ENCODE measurements at regions of chr11 and their contacts with region 1.

Region 1: GRCh38 chr11:119323538-119324033 is 6.7 kb upstream of the MCAM start:
- DNase-seq: peak; percentile 83
- H3K4me3 Mint-ChIP-seq: no peak overlapping the region
- H3K27ac Mint-ChIP-seq: no peak overlapping the region
- H3K4me1 Mint-ChIP-seq: peaks cover 35% of the 10 kb centered on the region
- H3K27me3 Mint-ChIP-seq: peaks cover 9% of the 10 kb centered on the region

Region 2: GRCh38 chr11:119168471-119169281 is 154.9 kb before region 1 on chr11 and contains the start of gene NLRX1:
- CTCF ChIA-PET with region 1: interaction called, 13 read pairs
- POLR2A ChIA-PET with region 1: interaction called, 3 read pairs
- DNase-seq: peak; percentile 89
- H3K4me3 Mint-ChIP-seq: peak within 1 kb of the TSS; percentile 89
- H3K27ac Mint-ChIP-seq: peak within 1 kb of the TSS; percentile 89
- H3K4me1 Mint-ChIP-seq: peaks cover 23% of the 10 kb centered on the region
- H3K27me3 Mint-ChIP-seq: no peaks in the 10 kb centered on the region
- total RNA-seq, gene NLRX1: 19.2 to 21.9 TPM

Region 3: GRCh38 chr11:119196833-119197483 is 126.6 kb before region 1 on chr11:
- CTCF ChIA-PET with region 1: interaction called, 19 read pairs
- POLR2A ChIA-PET with region 1: interaction called, 4 read pairs
- DNase-seq: peak; percentile 70
- H3K4me3 Mint-ChIP-seq: no peak overlapping the region
- H3K27ac Mint-ChIP-seq: no peak overlapping the region
- H3K4me1 Mint-ChIP-seq: peaks cover 3% of the 10 kb centered on the region
- H3K27me3 Mint-ChIP-seq: peaks cover 6% of the 10 kb centered on the region

Region 4: GRCh38 chr11:119262668-119263351 is 60.8 kb before region 1 on chr11:
- CTCF ChIA-PET with region 1: interaction called, 10 read pairs
- POLR2A ChIA-PET with region 1: interaction called, 8 read pairs
- DNase-seq: peak; percentile 19
- H3K4me3 Mint-ChIP-seq: no peak overlapping the region
- H3K27ac Mint-ChIP-seq: no peak overlapping the region
- H3K4me1 Mint-ChIP-seq: peaks cover 56% of the 10 kb centered on the region
- H3K27me3 Mint-ChIP-seq: no peaks in the 10 kb centered on the region

Region 5: DNA sequence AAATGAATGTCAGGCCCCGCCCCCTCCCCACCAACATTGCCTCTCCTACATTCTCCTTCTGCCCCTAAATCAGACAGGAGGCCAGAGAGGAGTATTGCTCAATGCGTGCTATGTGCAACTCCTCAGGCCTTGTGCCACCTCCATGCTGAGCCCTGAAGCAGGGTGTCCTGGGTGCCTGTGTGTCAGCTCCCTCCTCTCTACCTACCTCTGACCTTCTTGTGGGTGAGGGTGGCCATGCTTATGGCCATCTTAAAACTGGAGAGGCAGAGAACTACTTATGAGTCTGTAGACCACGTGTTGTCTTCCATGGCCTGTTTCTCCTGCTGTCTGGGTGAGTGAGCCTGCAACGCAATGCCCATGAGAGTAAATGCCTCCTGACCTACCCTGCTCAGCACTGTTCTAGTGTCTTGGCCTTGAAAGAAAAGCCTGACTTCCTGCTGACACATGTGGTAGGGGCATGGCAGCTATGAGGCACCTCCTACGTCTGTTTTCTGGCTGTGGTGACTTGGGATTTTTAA is 17.2 kb before region 1 on chr11:
- CTCF ChIA-PET with region 1: interaction called, 45 read pairs
- POLR2A ChIA-PET with region 1: interaction called, 10 read pairs
- DNase-seq: no peak
- H3K4me3 Mint-ChIP-seq: no peak overlapping the region
- H3K27ac Mint-ChIP-seq: peak overlapping the region; percentile 67
- H3K4me1 Mint-ChIP-seq: peaks cover 20% of the 10 kb centered on the region
- H3K27me3 Mint-ChIP-seq: no peaks in the 10 kb centered on the region

Region 6: DNA sequence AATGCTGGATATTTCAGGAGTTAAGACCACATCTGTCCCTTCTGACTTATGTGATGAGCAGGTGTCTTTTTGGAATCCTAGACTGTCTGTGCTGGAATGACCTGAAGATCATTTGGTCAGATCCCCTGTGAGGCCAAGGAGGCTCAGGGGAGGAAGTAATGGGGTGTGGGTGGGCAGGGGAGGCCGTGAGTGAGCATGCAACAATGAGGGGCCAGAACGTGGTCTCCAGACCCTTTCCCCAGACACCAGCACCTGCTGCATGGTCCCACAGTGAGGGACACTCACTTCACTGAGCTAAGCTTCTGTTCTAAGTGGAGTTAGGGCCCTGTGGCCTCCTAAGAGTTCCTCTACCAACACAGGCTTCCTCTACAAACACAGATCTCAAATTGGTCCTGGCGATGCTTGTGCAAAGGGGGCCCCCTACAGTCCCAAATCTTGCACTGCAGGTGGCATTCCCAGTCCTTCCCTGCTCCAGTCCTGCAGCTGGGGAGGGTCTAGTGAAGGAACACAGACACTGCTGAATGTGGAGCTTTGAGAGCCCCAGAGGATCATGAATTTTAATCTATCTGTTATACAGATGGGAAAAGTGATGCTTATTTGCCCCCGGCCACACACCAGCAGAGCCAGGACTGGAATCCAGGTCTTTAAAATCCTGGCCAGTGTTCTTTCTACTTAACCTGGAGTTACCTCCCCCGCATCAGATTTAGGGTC is 50.5 kb after region 1 on chr11:
- CTCF ChIA-PET with region 1: interaction called, 23 read pairs
- POLR2A ChIA-PET with region 1: no interaction called
- DNase-seq: peak; percentile 49
- H3K4me3 Mint-ChIP-seq: no peak overlapping the region
- H3K27ac Mint-ChIP-seq: no peak overlapping the region
- H3K4me1 Mint-ChIP-seq: peaks cover 18% of the 10 kb centered on the region
- H3K27me3 Mint-ChIP-seq: no peaks in the 10 kb centered on the region